Right ventricle myocardium superior (tissue), 1 donor: ENCODE measurements at regions of chr11 and their contacts with region 1.

Region 1: DNA sequence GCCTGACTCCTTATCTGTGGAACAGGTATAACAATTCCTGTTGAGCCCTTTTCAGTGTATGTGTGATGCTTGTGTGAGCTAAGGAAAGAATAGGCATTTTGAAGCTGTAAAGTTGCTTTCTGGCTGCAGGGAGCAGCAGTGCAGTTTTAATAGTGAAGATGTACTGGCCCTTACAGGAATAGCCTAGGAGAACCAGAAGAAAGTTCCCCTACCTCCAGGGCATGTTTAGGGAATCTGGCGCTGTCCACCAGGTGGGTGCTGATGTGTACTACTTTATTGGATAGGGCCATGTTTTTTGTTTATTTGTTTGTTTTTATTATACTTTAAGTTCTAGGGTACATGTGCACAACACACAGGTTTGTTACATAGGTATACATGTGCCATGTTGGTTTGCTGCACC is 11.5 kb downstream of the BMAL1 start:
- DNase-seq: no peak
- ATAC-seq: no peak

Region 2: GRCh38 chr11:13126430-13126829 is 162.7 kb before region 1 on chr11:
- intact Hi-C with region 1: no loop called
- DNase-seq: no peak
- ATAC-seq: no peak

Region 3: GRCh38 chr11:13335319-13335718 is 46.2 kb after region 1 on chr11:
- intact Hi-C with region 1: loop called (anchors 10 kb)
- DNase-seq: peak; percentile 57
- ATAC-seq: peak; percentile 44